Thyroid gland (tissue), 4 donors: ENCODE measurements at regions of chr14 and their contacts with region 1.

Region 1: GRCh38 chr14:67127174-67127573 is 62.1 kb upstream of the GARIN2 start:
- DNase-seq: no peak
- H3K4me3 ChIP-seq: no peak overlapping the region
- H3K27ac ChIP-seq: no peak overlapping the region
- H3K4me1 ChIP-seq: no peaks in the 10 kb centered on the region
- H3K27me3 ChIP-seq: no peaks in the 10 kb centered on the region
- CTCF ChIP-seq: no peak
- POLR2A ChIP-seq: no peak

Region 2: GRCh38 chr14:66624299-66624937 is 502.8 kb before region 1 on chr14:
- intact Hi-C with region 1: loop called (anchors 10 kb)
- DNase-seq: peak; percentile 47 to 64
- H3K4me3 ChIP-seq: no peak overlapping the region
- H3K27ac ChIP-seq: no peak overlapping the region
- H3K4me1 ChIP-seq: no peaks in the 10 kb centered on the region
- H3K27me3 ChIP-seq: no peaks in the 10 kb centered on the region
- CTCF ChIP-seq: peak in 5 of 6 experiments; percentile 29 to 79 (median 62)
- POLR2A ChIP-seq: no peak